ENCODE measurements at regions of chr9 and their contacts with region 1.

Region 1: DNA sequence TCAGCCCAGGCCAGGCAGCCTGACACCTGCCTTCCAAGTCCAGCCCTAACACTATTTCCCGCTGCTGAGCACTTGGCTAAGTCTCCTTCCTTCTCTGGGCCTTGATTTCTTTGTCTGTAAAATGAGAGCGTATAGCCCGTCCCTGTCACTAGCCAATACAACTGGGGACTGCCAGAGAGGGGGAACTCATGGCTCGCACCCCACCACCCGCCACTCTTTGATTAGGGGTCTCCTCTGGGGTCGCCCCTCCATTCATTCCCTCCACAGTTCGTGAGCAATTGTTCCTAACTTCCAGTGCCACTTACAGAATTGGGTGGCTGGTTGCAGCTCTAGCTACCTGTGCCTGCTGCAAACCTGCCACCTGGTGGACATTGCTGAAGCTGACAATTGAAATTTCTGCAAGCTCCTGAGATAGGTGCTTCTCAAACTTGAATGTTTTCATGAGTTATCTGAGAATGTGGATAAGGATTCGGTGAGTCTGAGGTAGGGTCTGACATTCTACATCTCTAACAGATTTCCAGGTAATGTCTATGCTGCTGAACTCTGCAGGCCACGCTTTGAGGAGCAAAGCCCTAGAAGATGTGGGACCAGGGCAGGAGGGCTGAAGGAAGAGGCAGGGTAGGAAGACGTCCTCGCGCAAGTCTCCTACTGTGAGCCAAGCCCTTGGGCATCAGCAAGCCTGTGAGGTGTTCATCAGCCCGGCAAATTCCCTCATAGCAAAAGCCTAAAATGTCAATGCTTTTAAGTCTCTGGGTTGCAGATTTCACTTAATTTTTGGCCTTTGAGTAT is 13.3 kb upstream of the RECK start:
- DNase-seq: peak; percentile 42 to 78 (median 65)
- ATAC-seq: peak; percentile 88
- H3K4me3 ChIP-seq: no peak overlapping the region
- H3K4me3 Mint-ChIP-seq: no peak overlapping the region
- H3K27ac ChIP-seq: no peak overlapping the region
- H3K27ac Mint-ChIP-seq: no peak overlapping the region
- H3K4me1 ChIP-seq: no peaks in the 10 kb centered on the region
- H3K4me1 Mint-ChIP-seq: peaks cover 2% of the 10 kb centered on the region
- H3K27me3 ChIP-seq: no peaks in the 10 kb centered on the region
- H3K27me3 Mint-ChIP-seq: peaks cover 5% of the 10 kb centered on the region
- CTCF ChIP-seq: peak; percentile 88

Region 2: GRCh38 chr9:35954942-35955546 is 68.4 kb before region 1 on chr9:
- CTCF ChIA-PET with region 1: interaction called, 47 read pairs
- POLR2A ChIA-PET with region 1: no interaction called
- intact Hi-C with region 1: loop called (anchors 1 kb)
- DNase-seq: peak in 8 of 9 experiments; percentile 12 to 80 (median 46)
- ATAC-seq: peak; percentile 67
- H3K4me3 ChIP-seq: no peak overlapping the region
- H3K4me3 Mint-ChIP-seq: no peak overlapping the region
- H3K27ac ChIP-seq: no peak overlapping the region
- H3K27ac Mint-ChIP-seq: no peak overlapping the region
- H3K4me1 ChIP-seq: no peaks in the 10 kb centered on the region
- H3K4me1 Mint-ChIP-seq: peaks cover 2% of the 10 kb centered on the region
- H3K27me3 ChIP-seq: peaks cover 0 to 3% of the 10 kb centered on the region in 2 experiments
- H3K27me3 Mint-ChIP-seq: peaks cover 12% of the 10 kb centered on the region
- CTCF ChIP-seq: peak; percentile 86

Region 3: GRCh38 chr9:35962126-35962906 is 61.1 kb before region 1 on chr9:
- CTCF ChIA-PET with region 1: interaction called, 47 read pairs
- POLR2A ChIA-PET with region 1: no interaction called
- intact Hi-C with region 1: no loop called
- DNase-seq: no peak
- ATAC-seq: no peak
- H3K4me3 ChIP-seq: no peak overlapping the region
- H3K4me3 Mint-ChIP-seq: no peak overlapping the region
- H3K27ac ChIP-seq: no peak overlapping the region
- H3K27ac Mint-ChIP-seq: no peak overlapping the region
- H3K4me1 ChIP-seq: no peaks in the 10 kb centered on the region
- H3K4me1 Mint-ChIP-seq: no peaks in the 10 kb centered on the region
- H3K27me3 ChIP-seq: no peaks in the 10 kb centered on the region
- H3K27me3 Mint-ChIP-seq: peaks cover 4% of the 10 kb centered on the region
- CTCF ChIP-seq: no peak

Region 4: GRCh38 chr9:36008774-36009300 is 14.6 kb before region 1 on chr9:
- CTCF ChIA-PET with region 1: interaction called, 56 read pairs
- POLR2A ChIA-PET with region 1: no interaction called
- intact Hi-C with region 1: loop called in 1 of 2 experiments (anchors 1 kb)
- DNase-seq: peak; percentile 8 to 83 (median 68)
- ATAC-seq: peak; percentile 99
- H3K4me3 ChIP-seq: no peak overlapping the region
- H3K4me3 Mint-ChIP-seq: no peak overlapping the region
- H3K27ac ChIP-seq: no peak overlapping the region
- H3K27ac Mint-ChIP-seq: no peak overlapping the region
- H3K4me1 ChIP-seq: no peaks in the 10 kb centered on the region
- H3K4me1 Mint-ChIP-seq: peaks cover 6% of the 10 kb centered on the region
- H3K27me3 ChIP-seq: peaks cover 0 to 6% of the 10 kb centered on the region in 2 experiments
- H3K27me3 Mint-ChIP-seq: peaks cover 31% of the 10 kb centered on the region
- CTCF ChIP-seq: peak; percentile 100

Region 5: DNA sequence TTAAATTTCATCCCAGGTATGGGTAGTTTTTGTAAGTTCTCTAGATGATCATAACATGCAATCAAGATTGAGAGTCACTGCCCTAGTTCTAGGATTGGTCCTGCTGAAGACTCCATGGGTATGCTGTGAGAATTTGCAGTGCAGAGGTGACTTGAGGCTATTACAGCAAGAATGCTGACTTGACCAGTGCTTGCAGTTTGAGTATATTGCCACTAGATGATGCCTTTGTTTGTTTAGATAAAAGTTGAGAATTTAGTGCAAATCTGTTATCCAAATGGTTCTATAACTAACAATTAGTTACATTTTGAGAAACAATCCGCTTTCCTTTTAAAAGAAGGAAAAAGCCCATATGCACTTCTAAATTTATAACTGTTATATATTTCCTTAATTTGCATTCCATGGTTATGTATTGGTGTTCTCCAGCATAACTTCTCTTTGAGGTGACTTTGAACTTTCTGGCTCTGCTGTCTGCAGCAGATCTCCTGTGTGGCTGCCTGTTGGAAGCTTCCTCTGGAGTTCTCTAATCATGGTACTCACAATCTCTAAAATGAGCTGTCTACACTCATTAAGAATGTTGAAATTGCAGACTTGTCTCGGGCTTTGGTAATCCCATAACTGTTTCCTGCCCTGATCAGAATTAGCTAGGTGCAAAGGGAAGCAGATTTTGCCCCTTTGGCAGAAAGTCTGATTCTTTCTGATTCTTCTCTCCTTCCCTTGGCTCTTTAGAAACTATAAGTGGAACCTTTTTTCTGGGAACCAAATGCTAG is 574.1 kb after region 1 on chr9:
- CTCF ChIA-PET with region 1: no interaction called
- POLR2A ChIA-PET with region 1: no interaction called
- intact Hi-C with region 1: no loop called
- DNase-seq: peak in 2 of 9 experiments; percentile 15 to 32
- ATAC-seq: peak; percentile 40
- H3K4me3 ChIP-seq: no peak overlapping the region
- H3K4me3 Mint-ChIP-seq: no peak overlapping the region
- H3K27ac ChIP-seq: no peak overlapping the region
- H3K27ac Mint-ChIP-seq: no peak overlapping the region
- H3K4me1 ChIP-seq: no peaks in the 10 kb centered on the region
- H3K4me1 Mint-ChIP-seq: peaks cover under 1% of the 10 kb centered on the region
- H3K27me3 ChIP-seq: no peaks in the 10 kb centered on the region
- H3K27me3 Mint-ChIP-seq: no peaks in the 10 kb centered on the region
- CTCF ChIP-seq: peak; percentile 19

Measured in CD8-positive, alpha-beta T cell (primary cell).